ENCODE measurements at regions of chr1 and their contacts with region 1.

Region 1: GRCh38 chr1:12208764-12209494 is 20.9 kb upstream of the VPS13D start:
- DNase-seq: peak; percentile 78 to 92 (median 84)
- ATAC-seq: peak; percentile 94
- H3K4me3 ChIP-seq: no peak overlapping the region
- H3K27ac ChIP-seq: peak overlapping the region in 1 of 2 donors; percentile 25
- H3K4me1 ChIP-seq: peaks cover 0 to 19% of the 10 kb centered on the region in 2 donors
- H3K27me3 ChIP-seq: no peaks in the 10 kb centered on the region
- CTCF ChIP-seq: peak; percentile 91 to 98

Region 2: GRCh38 chr1:12124693-12125421 is 84.1 kb before region 1 on chr1:
- intact Hi-C with region 1: loop called (anchors 2 to 5 kb)
- DNase-seq: peak; percentile 75 to 87 (median 84)
- ATAC-seq: peak; percentile 96
- H3K4me3 ChIP-seq: no peak overlapping the region
- H3K27ac ChIP-seq: peak overlapping the region in 1 of 2 donors; percentile 78
- H3K4me1 ChIP-seq: peaks cover 10 to 32% of the 10 kb centered on the region in 2 donors
- H3K27me3 ChIP-seq: peaks cover 0 to 8% of the 10 kb centered on the region in 2 donors
- CTCF ChIP-seq: peak; percentile 87 to 92

Region 3: GRCh38 chr1:12258272-12258671 is 49.3 kb after region 1 on chr1:
- intact Hi-C with region 1: no loop called
- DNase-seq: no peak
- ATAC-seq: no peak
- H3K4me3 ChIP-seq: no peak overlapping the region
- H3K27ac ChIP-seq: no peak overlapping the region
- H3K4me1 ChIP-seq: no peaks in the 10 kb centered on the region
- H3K27me3 ChIP-seq: no peaks in the 10 kb centered on the region
- CTCF ChIP-seq: no peak

Region 4: DNA sequence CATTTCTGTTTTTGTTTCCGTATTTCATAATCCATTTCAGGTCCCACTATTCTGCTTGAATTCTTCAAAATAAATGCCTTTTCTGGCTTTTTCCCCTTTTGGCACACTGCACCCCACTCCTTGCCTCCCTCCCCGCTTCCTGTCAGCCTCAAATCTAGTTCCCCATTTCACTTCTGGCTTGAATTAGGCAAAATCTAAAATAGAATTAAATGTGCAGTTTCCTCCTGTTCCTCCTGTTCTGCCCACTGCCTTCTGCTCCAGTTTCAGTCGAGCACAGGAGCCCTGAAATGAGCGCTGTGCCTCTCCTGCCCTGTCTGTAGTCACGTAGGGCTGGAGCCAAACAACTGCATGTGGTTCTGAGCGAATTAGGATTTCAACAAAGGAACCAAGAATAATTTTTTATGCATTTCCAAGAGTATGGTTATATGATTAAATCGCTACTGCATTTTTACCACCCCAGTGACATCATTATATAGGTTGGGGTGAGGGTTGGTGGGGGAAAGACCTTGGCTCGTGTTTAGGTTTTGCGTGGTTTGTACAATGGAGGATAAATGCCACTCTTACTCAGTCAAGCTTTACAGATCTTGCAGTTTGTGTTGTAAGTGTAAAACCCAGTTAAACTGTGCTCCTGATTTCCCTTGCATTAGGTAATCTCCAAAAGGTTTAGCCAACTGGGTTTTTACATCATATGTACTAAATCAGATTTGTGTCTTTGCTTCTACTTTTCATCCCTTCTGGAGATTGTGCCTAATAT is 135.8 kb after region 1 on chr1:
- intact Hi-C with region 1: no loop called
- DNase-seq: peak in 1 of 4 donors; percentile 43
- ATAC-seq: peak; percentile 37
- H3K4me3 ChIP-seq: no peak overlapping the region
- H3K27ac ChIP-seq: peak overlapping the region; percentile 16 to 79
- H3K4me1 ChIP-seq: peaks cover 13 to 29% of the 10 kb centered on the region in 2 donors
- H3K27me3 ChIP-seq: no peaks in the 10 kb centered on the region
- CTCF ChIP-seq: no peak

Measured in left lung (tissue), 14 donors.